Stomach (tissue), 19 donors: ENCODE measurements at regions of chr6 and their contacts with region 1.

Region 1: DNA sequence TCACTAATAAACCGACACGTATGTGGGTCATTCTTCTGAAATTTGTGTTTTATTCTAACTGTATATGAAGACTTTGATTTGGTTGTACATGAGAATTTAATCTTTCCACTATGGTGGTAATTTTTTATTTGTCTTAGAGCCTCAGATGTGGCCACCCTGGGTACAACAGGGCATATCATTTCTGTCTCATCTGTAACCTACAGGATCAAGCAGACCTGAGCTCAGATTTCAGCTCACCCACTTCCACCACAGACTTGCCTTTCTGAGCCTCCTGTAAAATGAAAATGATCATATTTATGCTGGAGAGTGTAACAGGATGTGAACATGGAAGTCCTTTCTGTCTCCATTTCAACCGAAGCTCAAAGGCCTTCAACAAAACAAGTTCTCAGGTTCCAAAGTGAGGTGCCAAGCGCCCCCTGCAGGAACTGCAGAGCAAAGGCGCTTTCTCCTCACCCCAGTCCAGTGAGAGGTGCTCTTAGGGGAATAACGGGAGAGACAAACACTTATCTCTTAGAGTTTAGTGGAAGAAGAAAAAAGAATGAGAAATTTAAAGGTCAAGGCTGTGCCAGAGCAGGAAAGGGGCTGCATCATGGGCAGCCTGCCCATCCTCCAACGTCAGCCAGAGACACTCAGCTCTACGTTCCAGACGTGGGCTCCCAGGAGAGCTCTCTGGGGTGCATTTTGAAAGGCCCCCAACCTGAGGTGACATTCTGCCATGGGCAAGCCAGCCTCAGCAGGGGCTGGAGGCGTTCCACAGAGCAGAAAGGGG is 23.0 kb upstream of the CD24 start:
- DNase-seq: peak; percentile 53 to 81
- H3K4me3 ChIP-seq: no peak overlapping the region
- H3K27ac ChIP-seq: no peak overlapping the region
- H3K4me1 ChIP-seq: no peaks in the 10 kb centered on the region
- H3K27me3 ChIP-seq: no peaks in the 10 kb centered on the region
- CTCF ChIP-seq: peak in 5 of 7 experiments; percentile 24 to 64 (median 51)
- EP300 ChIP-seq: no peak
- POLR2A ChIP-seq: no peak

Region 2: DNA sequence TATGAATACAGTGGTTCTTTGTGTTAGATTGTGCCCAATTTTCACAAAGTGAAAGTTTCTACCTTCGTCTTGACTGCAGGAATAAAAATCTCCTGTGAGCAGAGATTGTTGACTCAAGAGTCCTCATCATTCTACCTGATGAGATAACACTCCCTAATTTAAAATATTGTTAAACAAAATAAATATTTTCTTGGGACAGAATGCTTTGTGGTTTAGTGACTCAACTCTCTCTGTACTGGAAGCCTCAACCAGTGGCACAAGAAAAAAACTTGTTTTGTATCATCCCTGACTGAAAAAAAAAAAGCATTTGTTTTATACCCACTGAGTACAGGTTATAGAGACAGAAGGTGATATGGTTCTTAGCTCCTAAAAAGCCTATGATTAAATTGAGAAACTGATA is 558.1 kb before region 1 on chr6:
- intact Hi-C with region 1: loop called (anchors 10 kb)
- DNase-seq: no peak
- H3K4me3 ChIP-seq: no peak overlapping the region
- H3K27ac ChIP-seq: no peak overlapping the region
- H3K4me1 ChIP-seq: peaks cover 0 to 4% (median 0%) of the 10 kb centered on the region in 4 donors
- H3K27me3 ChIP-seq: peaks cover 0 to 49% (median 5%) of the 10 kb centered on the region in 3 donors
- CTCF ChIP-seq: no peak
- EP300 ChIP-seq: no peak
- POLR2A ChIP-seq: no peak

Region 3: DNA sequence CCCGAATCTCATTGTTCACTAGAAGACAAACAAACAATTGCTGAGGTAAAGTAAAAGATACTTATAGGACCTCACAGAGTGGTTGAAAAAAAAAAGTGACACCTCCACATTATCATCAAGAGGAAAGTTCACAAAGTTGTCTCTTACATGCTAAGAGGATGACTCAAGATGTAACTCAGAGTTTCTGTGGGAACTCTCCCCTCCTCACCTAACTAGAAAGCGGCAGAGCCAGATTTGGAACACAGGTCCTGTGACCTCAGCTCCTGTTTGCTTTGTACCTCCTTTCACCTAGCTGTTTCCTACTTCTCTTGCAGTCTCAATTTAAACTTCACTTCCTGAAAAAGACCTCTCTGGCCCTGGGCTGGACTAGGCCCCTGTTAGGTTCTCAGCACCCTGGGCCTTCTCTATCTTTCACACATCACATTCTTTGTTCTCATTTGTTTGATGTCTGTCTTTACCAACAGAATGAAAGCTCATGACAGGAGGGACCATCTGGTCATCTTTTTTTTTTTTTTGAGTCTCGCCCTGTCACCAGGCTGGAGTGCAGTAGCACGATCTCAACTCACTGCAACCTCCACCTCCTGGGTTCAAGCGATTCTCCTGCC is 83.8 kb before region 1 on chr6:
- intact Hi-C with region 1: no loop called
- DNase-seq: no peak
- H3K4me3 ChIP-seq: no peak overlapping the region
- H3K27ac ChIP-seq: no peak overlapping the region
- H3K4me1 ChIP-seq: peaks cover 0 to 15% (median 0%) of the 10 kb centered on the region in 4 donors
- H3K27me3 ChIP-seq: no peaks in the 10 kb centered on the region
- CTCF ChIP-seq: no peak
- EP300 ChIP-seq: no peak
- POLR2A ChIP-seq: no peak